Mammary epithelial cell (primary cell): ENCODE measurements at regions of chr4 and their contacts with region 1.

Region 1: DNA sequence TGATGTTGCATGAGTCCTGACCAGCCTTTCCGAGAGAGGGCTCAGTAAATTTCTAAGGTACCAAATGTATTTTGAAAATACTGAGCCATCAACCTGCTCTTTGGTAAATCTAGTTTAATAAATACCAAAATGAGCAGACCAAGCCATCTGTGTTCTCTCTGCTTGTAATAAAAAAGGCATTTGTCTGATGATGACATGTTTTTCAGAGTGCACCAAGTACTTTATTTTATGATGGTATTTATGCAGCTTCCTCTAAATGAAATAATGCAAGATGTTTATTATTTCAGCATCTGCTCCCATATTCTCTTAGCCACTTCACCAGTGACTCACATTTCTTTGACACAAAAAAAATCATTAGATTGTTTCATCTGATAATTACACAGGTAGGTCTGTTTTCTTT is 700.5 kb downstream of the TRIML1 start:
- DNase-seq: no peak
- H3K4me3 ChIP-seq: no peak overlapping the region
- H3K27ac ChIP-seq: no peak overlapping the region
- H3K4me1 ChIP-seq: no peaks in the 10 kb centered on the region
- H3K27me3 ChIP-seq: no peaks in the 10 kb centered on the region
- CTCF ChIP-seq: no peak

Region 2: GRCh38 chr4:188804861-188805260 is 34.8 kb before region 1 on chr4:
- CTCF ChIA-PET with region 1: no interaction called
- dilution Hi-C with region 1: loop called (anchors 5 kb)
- in situ Hi-C with region 1: no loop called
- intact Hi-C with region 1: no loop called
- DNase-seq: no peak
- H3K4me3 ChIP-seq: no peak overlapping the region
- H3K27ac ChIP-seq: no peak overlapping the region
- H3K4me1 ChIP-seq: no peaks in the 10 kb centered on the region
- H3K27me3 ChIP-seq: no peaks in the 10 kb centered on the region
- CTCF ChIP-seq: no peak